Aorta (tissue), 5 donors: ENCODE measurements at regions of chr5 and their contacts with region 1.

Region 1: DNA sequence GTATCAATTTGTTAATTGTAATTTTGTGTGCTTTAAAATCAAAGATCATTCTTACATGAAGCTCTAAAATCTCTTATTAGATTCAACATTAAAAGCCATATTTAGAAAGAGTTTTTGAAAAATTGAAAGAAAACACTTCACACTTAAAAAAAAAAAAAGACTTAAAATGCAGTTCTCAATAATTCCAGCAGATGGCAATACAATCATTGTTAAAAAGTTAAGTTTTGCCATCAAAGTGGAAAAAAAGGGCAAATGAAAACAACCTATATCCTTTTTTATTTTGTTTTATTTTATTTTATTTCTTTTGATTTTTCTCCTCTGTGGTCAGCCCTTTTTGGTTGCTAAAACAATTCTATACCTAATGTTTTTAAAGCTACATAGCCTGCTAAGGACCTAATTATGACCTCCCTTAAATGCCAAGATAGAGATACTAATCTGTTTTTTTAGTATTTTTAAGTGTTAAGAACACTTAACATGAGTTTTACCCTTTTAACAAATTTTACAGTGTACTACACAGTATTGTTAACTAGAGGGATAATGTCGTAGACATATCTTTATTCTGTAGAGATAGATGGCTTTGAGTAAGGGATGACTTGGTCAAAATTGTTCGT is 154.2 kb upstream of the DAB2 start:
- DNase-seq: no peak
- ATAC-seq: no peak
- H3K4me3 ChIP-seq: no peak overlapping the region
- H3K27ac ChIP-seq: no peak overlapping the region
- H3K4me1 ChIP-seq: no peaks in the 10 kb centered on the region
- H3K27me3 ChIP-seq: no peaks in the 10 kb centered on the region

Region 2: DNA sequence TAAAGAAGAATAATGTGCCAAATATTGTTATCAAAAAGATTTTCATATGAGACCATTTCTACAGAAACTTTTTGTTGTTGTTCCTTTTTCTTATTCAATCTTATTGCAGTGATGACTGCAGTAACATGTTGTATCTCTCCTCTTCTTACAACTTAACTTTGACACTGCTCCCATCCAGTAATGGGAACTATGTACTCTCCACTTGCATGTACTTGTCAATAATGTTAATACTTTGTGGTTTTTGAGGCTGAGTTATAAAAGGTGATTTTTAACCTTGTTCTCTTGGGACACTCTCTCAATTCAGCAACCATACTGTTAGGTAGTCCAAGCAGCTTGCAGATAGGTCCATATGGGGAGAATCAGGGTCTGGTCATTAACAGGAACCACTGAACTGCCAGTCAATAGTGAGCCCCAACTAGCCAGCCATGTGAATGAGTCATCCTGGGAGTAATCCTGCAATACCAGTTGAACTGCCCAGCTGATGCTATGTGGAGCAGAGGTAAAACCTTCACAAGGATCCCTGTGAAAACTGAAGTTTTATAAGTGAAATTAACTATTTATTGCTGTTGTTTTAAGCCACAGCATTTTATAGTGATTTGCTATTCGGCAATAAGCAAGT is 45.4 kb after region 1 on chr5:
- intact Hi-C with region 1: no loop called
- DNase-seq: no peak
- ATAC-seq: no peak
- H3K4me3 ChIP-seq: no peak overlapping the region
- H3K27ac ChIP-seq: no peak overlapping the region
- H3K4me1 ChIP-seq: no peaks in the 10 kb centered on the region
- H3K27me3 ChIP-seq: peaks cover 0 to 2% of the 10 kb centered on the region in 2 donors

Region 3: GRCh38 chr5:39854771-39855410 is 275.9 kb after region 1 on chr5:
- intact Hi-C with region 1: no loop called
- DNase-seq: no peak
- ATAC-seq: no peak
- H3K4me3 ChIP-seq: no peak overlapping the region
- H3K27ac ChIP-seq: no peak overlapping the region
- H3K4me1 ChIP-seq: no peaks in the 10 kb centered on the region
- H3K27me3 ChIP-seq: no peaks in the 10 kb centered on the region

Region 4: DNA sequence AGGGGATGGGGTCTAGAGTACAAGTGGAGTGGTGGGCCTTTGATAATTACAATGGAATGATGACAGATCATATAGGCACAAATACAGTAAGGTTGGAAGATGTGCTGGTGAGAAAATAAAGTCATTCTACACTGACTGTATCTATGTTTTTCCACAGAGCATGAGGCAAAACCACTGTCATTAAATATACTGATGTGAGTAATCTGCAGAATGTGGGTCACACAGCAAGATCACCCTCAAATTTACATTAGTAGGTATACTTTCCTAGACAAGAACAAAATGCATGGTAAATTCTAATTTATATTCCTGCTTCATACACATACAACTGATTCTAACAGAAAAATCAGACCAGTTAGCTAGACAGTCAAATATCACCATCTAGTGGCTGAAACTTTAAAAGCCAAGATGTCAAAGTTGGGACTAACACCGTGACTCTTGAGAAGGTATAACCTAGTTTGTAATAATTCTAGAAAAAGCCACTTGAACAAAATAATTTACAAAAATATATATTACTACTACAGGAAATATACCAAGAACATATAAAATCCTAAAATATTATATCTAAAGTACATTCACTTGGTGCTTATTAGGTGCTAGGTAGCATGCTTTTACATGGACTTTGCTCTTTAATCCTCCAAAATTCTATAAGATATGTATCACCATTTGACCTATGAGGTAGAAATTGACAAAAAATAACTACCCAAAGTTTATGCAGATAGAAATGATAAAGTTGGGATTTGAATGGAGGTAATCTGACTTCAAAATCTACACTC is 1157.3 kb after region 1 on chr5:
- intact Hi-C with region 1: loop called in 1 of 2 experiments (anchors 10 kb)
- DNase-seq: no peak
- ATAC-seq: peak; percentile 74
- H3K4me3 ChIP-seq: no peak overlapping the region
- H3K27ac ChIP-seq: no peak overlapping the region
- H3K4me1 ChIP-seq: peaks cover 0 to 2% of the 10 kb centered on the region in 2 donors
- H3K27me3 ChIP-seq: no peaks in the 10 kb centered on the region

Region 5: GRCh38 chr5:40879163-40879942 is 1300.4 kb after region 1 on chr5:
- intact Hi-C with region 1: loop called in 1 of 2 experiments (anchors 10 kb)
- DNase-seq: no peak
- ATAC-seq: no peak
- H3K4me3 ChIP-seq: no peak overlapping the region
- H3K27ac ChIP-seq: no peak overlapping the region
- H3K4me1 ChIP-seq: no peaks in the 10 kb centered on the region
- H3K27me3 ChIP-seq: no peaks in the 10 kb centered on the region